Endothelial cell of umbilical vein (primary cell): ENCODE measurements at regions of chr2 and their contacts with region 1.

Region 1: DNA sequence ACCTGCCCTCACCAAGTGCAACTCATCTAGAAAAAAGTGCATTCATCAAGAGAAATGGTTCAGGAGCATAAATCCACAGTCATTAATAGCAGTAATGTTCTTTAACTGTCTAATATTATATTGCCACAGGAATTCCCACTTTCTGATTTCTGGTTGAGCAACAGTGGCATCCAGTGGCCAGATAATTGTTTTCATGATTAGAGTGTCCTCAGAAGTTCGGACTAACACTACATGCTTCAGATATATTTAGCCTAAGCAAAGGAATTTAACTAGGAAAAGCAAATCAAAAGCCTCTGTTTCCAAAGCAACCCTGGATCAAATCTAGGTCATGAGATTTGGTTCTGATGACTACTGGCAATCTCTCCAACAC is 9.8 kb upstream of the ERBB4 start:
- DNase-seq: peak; percentile 54
- H3K4me3 ChIP-seq: no peak overlapping the region
- H3K27ac ChIP-seq: no peak overlapping the region
- H3K4me1 ChIP-seq: no peaks in the 10 kb centered on the region
- H3K27me3 ChIP-seq: no peaks in the 10 kb centered on the region
- CTCF ChIP-seq: peak; percentile 12 to 13
- POLR2A ChIP-seq: no peak

Region 2: GRCh38 chr2:211085056-211085680 is 1463.3 kb before region 1 on chr2:
- CTCF ChIA-PET with region 1: interaction called, 12 read pairs
- POLR2A ChIA-PET with region 1: no interaction called
- dilution Hi-C with region 1: no loop called
- intact Hi-C with region 1: loop called (anchors 1 kb)
- DNase-seq: peak; percentile 43
- H3K4me3 ChIP-seq: no peak overlapping the region
- H3K27ac ChIP-seq: no peak overlapping the region
- H3K4me1 ChIP-seq: no peaks in the 10 kb centered on the region
- H3K27me3 ChIP-seq: peaks cover 0 to 4% of the 10 kb centered on the region in 2 experiments
- CTCF ChIP-seq: peak; percentile 46
- POLR2A ChIP-seq: no peak

Region 3: GRCh38 chr2:212147921-212148513 is 400.4 kb before region 1 on chr2:
- CTCF ChIA-PET with region 1: interaction called, 3 read pairs
- POLR2A ChIA-PET with region 1: no interaction called
- dilution Hi-C with region 1: no loop called
- intact Hi-C with region 1: loop called (anchors 5 kb)
- DNase-seq: peak; percentile 39
- H3K4me3 ChIP-seq: no peak overlapping the region
- H3K27ac ChIP-seq: no peak overlapping the region
- H3K4me1 ChIP-seq: no peaks in the 10 kb centered on the region
- H3K27me3 ChIP-seq: no peaks in the 10 kb centered on the region
- CTCF ChIP-seq: peak; percentile 19 to 21
- POLR2A ChIP-seq: no peak